ENCODE measurements at regions of chr16 and their contacts with region 1.

Region 1: GRCh38 chr16:84952335-84953189 is 58.8 kb downstream of the ZDHHC7 start:
- DNase-seq: peak; percentile 83
- H3K4me3 Mint-ChIP-seq: no peak overlapping the region
- H3K27ac Mint-ChIP-seq: no peak overlapping the region
- H3K4me1 Mint-ChIP-seq: no peaks in the 10 kb centered on the region
- H3K27me3 Mint-ChIP-seq: no peaks in the 10 kb centered on the region
- CTCF ChIP-seq: peak; percentile 76

Region 2: GRCh38 chr16:84780544-84781376 is 171.8 kb before region 1 on chr16:
- CTCF ChIA-PET with region 1: interaction called, 10 read pairs
- POLR2A ChIA-PET with region 1: interaction called, 4 read pairs
- intact Hi-C with region 1: no loop called
- DNase-seq: no peak
- H3K4me3 Mint-ChIP-seq: no peak overlapping the region
- H3K27ac Mint-ChIP-seq: no peak overlapping the region
- H3K4me1 Mint-ChIP-seq: peaks cover 6% of the 10 kb centered on the region
- H3K27me3 Mint-ChIP-seq: no peaks in the 10 kb centered on the region
- CTCF ChIP-seq: no peak

Region 3: DNA sequence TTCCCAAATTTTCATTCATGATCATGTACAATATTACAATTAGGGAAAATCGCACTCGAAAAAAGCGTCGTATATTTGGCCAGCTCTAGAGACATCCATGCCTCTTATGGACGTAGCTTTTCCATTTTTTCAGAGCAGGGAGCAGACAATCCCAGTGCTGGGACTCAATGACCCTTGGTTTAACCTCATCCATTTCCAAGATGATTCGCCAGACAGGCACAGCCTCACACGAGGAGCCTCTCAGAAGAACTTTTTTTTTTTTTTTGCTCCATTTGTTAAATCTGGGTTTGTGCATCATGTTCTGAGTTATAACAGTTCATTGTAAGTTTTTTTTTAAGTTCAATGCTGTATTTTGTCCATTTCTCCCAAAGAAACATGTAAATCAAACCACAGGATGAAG is 33.3 kb before region 1 on chr16:
- CTCF ChIA-PET with region 1: interaction called, 82 read pairs
- POLR2A ChIA-PET with region 1: no interaction called
- intact Hi-C with region 1: no loop called
- DNase-seq: no peak
- H3K4me3 Mint-ChIP-seq: no peak overlapping the region
- H3K27ac Mint-ChIP-seq: no peak overlapping the region
- H3K4me1 Mint-ChIP-seq: no peaks in the 10 kb centered on the region
- H3K27me3 Mint-ChIP-seq: peaks cover 43% of the 10 kb centered on the region
- CTCF ChIP-seq: no peak

Region 4: DNA sequence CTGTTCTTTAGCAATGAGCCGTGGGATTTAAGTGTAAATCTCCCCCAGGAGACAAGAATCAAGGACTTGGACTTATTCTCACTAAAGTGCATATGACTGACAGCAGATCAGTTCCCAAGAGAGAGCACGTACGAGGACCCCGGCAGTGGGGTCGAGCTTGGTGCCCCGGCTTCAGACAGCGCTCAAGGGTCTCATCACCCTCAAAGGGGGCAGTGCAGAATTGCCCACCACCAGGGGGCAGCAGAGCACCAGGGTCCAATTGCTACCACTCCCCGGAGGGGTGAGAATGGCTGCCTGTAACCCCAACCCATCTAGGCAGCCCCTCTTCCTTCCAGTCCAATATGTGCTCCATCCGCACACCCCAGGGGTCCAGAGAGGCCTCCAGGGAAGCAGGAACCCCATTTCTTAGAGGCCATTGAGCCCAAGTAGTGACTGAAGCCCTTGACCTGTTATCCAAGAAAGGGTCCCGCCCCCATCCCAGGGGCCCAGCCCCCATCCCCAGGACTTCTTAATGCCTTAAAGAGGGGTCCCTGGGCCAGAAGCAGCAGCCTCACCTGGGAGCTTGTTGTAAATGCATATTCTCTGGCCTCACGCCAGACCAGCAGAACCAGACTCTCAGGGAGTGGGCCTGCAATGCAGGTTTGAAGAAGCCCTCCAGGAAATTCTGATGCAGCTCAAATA is 27.3 kb before region 1 on chr16:
- CTCF ChIA-PET with region 1: interaction called, 82 read pairs
- POLR2A ChIA-PET with region 1: interaction called, 3 read pairs
- intact Hi-C with region 1: loop called (anchors 1 kb)
- DNase-seq: peak; percentile 59
- H3K4me3 Mint-ChIP-seq: no peak overlapping the region
- H3K27ac Mint-ChIP-seq: no peak overlapping the region
- H3K4me1 Mint-ChIP-seq: peaks cover 6% of the 10 kb centered on the region
- H3K27me3 Mint-ChIP-seq: no peaks in the 10 kb centered on the region
- CTCF ChIP-seq: peak; percentile 91

Region 5: GRCh38 chr16:84933774-84934631 is 18.6 kb before region 1 on chr16:
- CTCF ChIA-PET with region 1: interaction called, 14 read pairs
- POLR2A ChIA-PET with region 1: no interaction called
- intact Hi-C with region 1: no loop called
- DNase-seq: no peak
- H3K4me3 Mint-ChIP-seq: no peak overlapping the region
- H3K27ac Mint-ChIP-seq: no peak overlapping the region
- H3K4me1 Mint-ChIP-seq: peaks cover 6% of the 10 kb centered on the region
- H3K27me3 Mint-ChIP-seq: no peaks in the 10 kb centered on the region
- CTCF ChIP-seq: no peak

Region 6: GRCh38 chr16:84940670-84941551 is 11.7 kb before region 1 on chr16:
- CTCF ChIA-PET with region 1: interaction called, 22 read pairs
- POLR2A ChIA-PET with region 1: interaction called, 3 read pairs
- intact Hi-C with region 1: no loop called
- DNase-seq: no peak
- H3K4me3 Mint-ChIP-seq: no peak overlapping the region
- H3K27ac Mint-ChIP-seq: no peak overlapping the region
- H3K4me1 Mint-ChIP-seq: no peaks in the 10 kb centered on the region
- H3K27me3 Mint-ChIP-seq: no peaks in the 10 kb centered on the region
- CTCF ChIP-seq: no peak

Region 7: DNA sequence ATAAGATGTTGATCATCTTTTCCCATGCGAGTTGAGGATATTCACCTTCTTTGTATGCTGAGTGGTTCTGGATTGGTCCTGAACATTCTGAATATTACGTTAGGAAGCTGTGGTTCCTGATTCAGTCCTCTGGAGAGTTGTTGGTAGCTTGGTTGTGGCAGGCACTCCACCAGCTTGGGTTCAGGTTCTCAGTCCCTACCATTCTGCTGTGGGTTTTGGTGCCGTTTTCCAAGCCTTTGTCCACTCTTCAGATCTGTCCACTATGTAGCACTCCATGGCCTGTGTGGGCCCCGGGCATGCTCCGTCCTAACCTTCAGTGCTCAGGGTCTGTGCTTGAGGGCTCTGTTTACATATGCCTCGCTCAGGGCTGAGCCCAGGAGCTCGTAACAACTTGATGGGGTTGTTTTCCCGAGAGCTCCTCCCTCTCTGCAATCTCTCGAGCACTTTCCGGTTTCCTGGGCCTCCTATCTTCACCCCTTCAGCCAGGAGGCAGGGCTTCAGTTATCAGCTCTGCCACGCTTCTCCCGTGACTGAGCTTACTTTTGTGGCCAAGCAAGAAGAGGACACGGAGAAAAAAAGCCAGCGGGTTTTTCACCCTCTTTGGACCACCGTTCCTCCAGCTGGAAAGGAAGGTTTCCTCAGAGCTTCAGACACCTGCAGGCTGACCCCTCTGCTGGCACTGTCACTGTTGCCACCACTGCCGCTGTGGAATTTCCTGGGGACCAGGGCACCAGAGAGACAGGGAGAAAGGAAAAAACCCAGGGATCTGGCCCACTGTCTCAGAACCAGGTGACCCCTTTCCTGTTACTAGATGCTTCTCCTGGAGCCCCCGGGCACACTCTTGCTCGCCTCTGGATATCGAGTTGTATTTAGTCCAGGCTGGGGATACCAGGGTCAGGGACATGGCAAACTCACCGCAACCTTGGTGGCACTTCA is 94.6 kb after region 1 on chr16:
- CTCF ChIA-PET with region 1: no interaction called
- POLR2A ChIA-PET with region 1: no interaction called
- intact Hi-C with region 1: no loop called
- DNase-seq: no peak
- H3K4me3 Mint-ChIP-seq: no peak overlapping the region
- H3K27ac Mint-ChIP-seq: no peak overlapping the region
- H3K4me1 Mint-ChIP-seq: no peaks in the 10 kb centered on the region
- H3K27me3 Mint-ChIP-seq: no peaks in the 10 kb centered on the region
- CTCF ChIP-seq: no peak